GM12878 (cell line): ENCODE measurements at regions of chr20 and their contacts with region 1.

Region 1: DNA sequence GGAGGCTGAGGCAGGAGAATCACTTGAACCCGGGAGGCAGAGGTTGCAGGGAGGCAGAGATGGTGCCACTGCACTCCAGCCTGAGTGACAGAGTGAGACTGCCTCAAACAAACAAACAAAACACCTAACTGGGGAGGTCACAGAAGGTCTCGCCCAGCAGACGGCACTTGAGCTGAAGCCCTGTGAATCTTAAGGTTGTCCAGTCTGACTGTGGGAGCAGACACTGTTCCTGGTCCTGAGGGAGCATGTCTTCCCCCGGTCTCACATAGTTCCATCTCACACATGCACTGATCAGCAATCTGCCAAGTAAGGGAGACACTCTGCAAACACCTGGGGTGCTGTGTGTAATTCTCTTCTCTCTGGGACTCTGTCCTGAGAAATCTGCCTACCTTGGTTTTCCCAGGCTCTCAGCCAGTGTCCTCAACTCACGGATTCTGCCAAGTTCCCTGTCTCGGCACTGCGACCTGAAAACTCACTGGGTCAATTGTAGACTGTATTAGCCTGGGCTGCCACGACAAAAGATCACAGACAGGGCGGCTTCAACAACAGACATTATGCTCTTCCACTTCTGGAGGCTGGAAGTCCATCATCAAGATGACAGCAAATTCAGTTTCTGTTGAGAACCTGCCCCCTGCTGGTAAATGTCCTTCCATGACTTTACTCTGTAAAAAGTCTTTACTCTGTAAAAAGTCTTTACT is 94.3 kb downstream of the JPH2 start:
- DNase-seq: no peak
- ATAC-seq: peak; percentile 81
- H3K4me3 ChIP-seq: no peak overlapping the region
- H3K27ac ChIP-seq: no peak overlapping the region
- H3K4me1 ChIP-seq: peaks cover 8% of the 10 kb centered on the region
- H3K27me3 ChIP-seq: no peaks in the 10 kb centered on the region
- CTCF ChIP-seq: peak; percentile 49 to 58 (median 53)
- EP300 ChIP-seq: no peak
- POLR2A ChIP-seq: no peak
- RAD21 ChIP-seq: peak; percentile 59

Region 2: GRCh38 chr20:43448748-43449535 is 643.8 kb before region 1 on chr20:
- CTCF ChIA-PET with region 1: interaction called, 24 read pairs
- POLR2A ChIA-PET with region 1: interaction called, 4 read pairs
- RAD21 ChIA-PET with region 1: interaction called, 6 read pairs
- SMC1A ChIA-PET with region 1: interaction called, 7 read pairs
- in situ Hi-C with region 1: no loop called
- intact Hi-C with region 1: loop called (anchors 1 kb)
- DNase-seq: peak; percentile 13
- ATAC-seq: peak; percentile 89
- H3K4me3 ChIP-seq: no peak overlapping the region
- H3K27ac ChIP-seq: no peak overlapping the region
- H3K4me1 ChIP-seq: no peaks in the 10 kb centered on the region
- H3K27me3 ChIP-seq: no peaks in the 10 kb centered on the region
- CTCF ChIP-seq: peak; percentile 74 to 87 (median 77)
- EP300 ChIP-seq: no peak
- POLR2A ChIP-seq: no peak
- RAD21 ChIP-seq: peak; percentile 90

Region 3: GRCh38 chr20:44123251-44123650 is 30.6 kb after region 1 on chr20:
- CTCF ChIA-PET with region 1: no interaction called
- POLR2A ChIA-PET with region 1: no interaction called
- RAD21 ChIA-PET with region 1: no interaction called
- SMC1A ChIA-PET with region 1: no interaction called
- in situ Hi-C with region 1: no loop called
- intact Hi-C with region 1: no loop called
- DNase-seq: no peak
- ATAC-seq: no peak
- H3K4me3 ChIP-seq: no peak overlapping the region
- H3K27ac ChIP-seq: no peak overlapping the region
- H3K4me1 ChIP-seq: no peaks in the 10 kb centered on the region
- H3K27me3 ChIP-seq: peaks cover 0 to 3% of the 10 kb centered on the region in 2 experiments; a peak in 3 of 4 replicates
- CTCF ChIP-seq: no peak
- EP300 ChIP-seq: no peak
- POLR2A ChIP-seq: no peak
- RAD21 ChIP-seq: no peak